PC-3 (cell line): ENCODE measurements at regions of chr4 and their contacts with region 1.

Region 1: DNA sequence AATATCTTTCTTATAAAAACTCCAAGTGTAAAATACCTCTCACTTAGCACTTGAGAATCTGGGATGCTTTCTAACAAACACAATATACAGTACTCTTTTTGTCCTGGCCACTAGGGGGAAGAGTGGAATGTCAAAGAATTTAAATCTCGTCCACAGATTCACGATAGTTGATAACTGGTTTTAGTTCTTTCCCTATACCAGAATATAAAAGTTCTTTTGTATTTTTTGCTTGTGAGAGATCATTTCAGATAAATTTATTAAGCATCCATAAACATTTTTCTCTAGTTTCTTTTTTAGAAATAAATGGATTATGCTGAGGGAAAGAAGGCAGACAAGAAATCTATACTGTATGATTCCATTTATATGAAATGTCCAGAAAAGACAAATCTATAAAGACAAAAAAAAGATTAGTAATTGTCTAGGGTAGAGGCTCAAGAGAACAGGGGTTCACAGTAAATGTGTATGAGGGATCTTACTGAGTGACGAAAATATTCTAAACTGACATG is 50.4 kb downstream of the MGARP start:
- DNase-seq: peak; percentile 62
- ATAC-seq: peak; percentile 76
- H3K4me3 ChIP-seq: no peak overlapping the region
- H3K27ac ChIP-seq: no peak overlapping the region
- H3K4me1 ChIP-seq: no peaks in the 10 kb centered on the region
- H3K27me3 ChIP-seq: no peaks in the 10 kb centered on the region
- CTCF ChIP-seq: peak; percentile 70

Region 2: GRCh38 chr4:139099366-139099982 is 130.1 kb before region 1 on chr4:
- CTCF ChIA-PET with region 1: no interaction called
- POLR2A ChIA-PET with region 1: no interaction called
- intact Hi-C with region 1: loop called (anchors 2 kb)
- DNase-seq: peak; percentile 81
- ATAC-seq: peak; percentile 57
- H3K4me3 ChIP-seq: no peak overlapping the region
- H3K27ac ChIP-seq: no peak overlapping the region
- H3K4me1 ChIP-seq: no peaks in the 10 kb centered on the region
- H3K27me3 ChIP-seq: no peaks in the 10 kb centered on the region
- CTCF ChIP-seq: peak; percentile 81

Region 3: GRCh38 chr4:139184129-139184528 is 45.5 kb before region 1 on chr4:
- CTCF ChIA-PET with region 1: no interaction called
- POLR2A ChIA-PET with region 1: no interaction called
- intact Hi-C with region 1: loop called (anchors 2 kb)
- DNase-seq: peak; percentile 31
- ATAC-seq: peak; percentile 76
- H3K4me3 ChIP-seq: no peak overlapping the region
- H3K27ac ChIP-seq: no peak overlapping the region
- H3K4me1 ChIP-seq: no peaks in the 10 kb centered on the region
- H3K27me3 ChIP-seq: no peaks in the 10 kb centered on the region
- CTCF ChIP-seq: peak; percentile 39; the same call in 1 of the 2 replicates

Region 4: GRCh38 chr4:139279760-139280620 is 50.4 kb after region 1 on chr4 and contains the start of gene MGARP:
- CTCF ChIA-PET with region 1: no interaction called
- POLR2A ChIA-PET with region 1: no interaction called
- intact Hi-C with region 1: loop called (anchors 5 kb)
- DNase-seq: no peak
- ATAC-seq: no peak
- H3K4me3 ChIP-seq: no peak within 1 kb of the TSS
- H3K27ac ChIP-seq: no peak within 1 kb of the TSS
- H3K4me1 ChIP-seq: no peaks in the 10 kb centered on the region
- H3K27me3 ChIP-seq: no peaks in the 10 kb centered on the region
- CTCF ChIP-seq: no peak
- total RNA-seq, gene MGARP: 0.33 TPM in 1 of 2 replicates, not detected in the other

Region 5: DNA sequence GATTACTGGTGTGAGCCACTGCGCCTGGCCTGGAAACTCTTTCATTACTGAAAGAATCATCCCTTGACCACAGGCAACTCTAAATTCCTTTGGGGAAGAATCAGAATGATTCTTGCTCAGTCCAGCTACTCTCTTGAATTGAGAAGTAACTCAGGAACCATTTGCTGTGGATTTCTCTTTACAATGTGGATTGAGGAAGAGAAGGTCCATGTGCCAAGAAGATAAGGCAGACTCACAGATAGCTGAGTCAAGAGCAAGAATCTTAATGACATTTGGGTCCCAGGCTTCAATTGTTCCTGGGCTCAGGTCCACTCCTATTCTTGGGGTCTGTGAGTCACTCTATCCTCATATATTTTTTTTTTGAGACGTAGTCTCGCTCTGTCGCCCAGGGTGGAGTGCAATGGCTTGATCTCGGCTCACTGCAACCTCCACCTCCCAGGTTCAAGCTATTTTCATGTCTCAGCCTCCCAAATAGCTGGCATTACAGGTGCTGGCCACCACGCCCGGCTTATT is 56.7 kb after region 1 on chr4:
- CTCF ChIA-PET with region 1: interaction called, 12 read pairs
- POLR2A ChIA-PET with region 1: no interaction called
- intact Hi-C with region 1: loop called (anchors 5 kb)
- DNase-seq: no peak
- ATAC-seq: no peak
- H3K4me3 ChIP-seq: no peak overlapping the region
- H3K27ac ChIP-seq: no peak overlapping the region
- H3K4me1 ChIP-seq: no peaks in the 10 kb centered on the region
- H3K27me3 ChIP-seq: no peaks in the 10 kb centered on the region
- CTCF ChIP-seq: no peak

Region 6: DNA sequence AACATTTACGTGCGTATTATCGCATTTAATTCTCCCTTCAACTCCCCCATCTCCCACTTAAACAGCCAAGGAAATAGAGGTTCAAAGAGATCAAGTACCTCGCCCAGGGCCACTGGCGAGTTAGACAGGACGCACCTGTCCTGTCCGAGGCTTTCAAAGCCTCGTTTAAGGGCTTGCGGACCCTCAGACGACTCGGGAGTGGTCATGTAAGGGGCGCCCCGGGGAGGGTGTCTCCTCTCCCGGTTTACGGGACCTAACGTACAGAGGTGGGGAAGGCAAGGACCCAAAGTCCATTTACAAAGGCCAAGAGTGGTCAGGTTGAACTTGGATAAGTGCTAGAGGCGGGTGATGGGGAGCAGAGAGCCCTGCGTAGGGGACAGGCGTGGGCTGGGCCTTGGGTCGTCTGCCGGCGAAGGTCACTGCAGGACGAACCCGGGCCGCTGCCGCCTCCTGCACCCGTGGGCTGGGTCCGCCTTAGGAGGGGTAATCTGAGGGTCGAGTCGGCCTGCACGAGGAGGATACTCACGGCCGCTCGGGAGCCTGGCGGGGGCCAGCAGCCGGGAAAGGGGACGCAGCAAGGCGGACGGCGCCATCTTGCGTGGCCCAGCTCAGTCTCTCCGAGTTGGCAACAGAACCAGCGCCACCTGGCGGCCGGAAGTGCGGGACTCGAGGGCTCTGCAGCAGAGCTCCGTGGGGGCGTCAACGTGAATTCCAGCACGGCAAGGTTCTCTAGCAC is 65.8 kb after region 1 on chr4:
- CTCF ChIA-PET with region 1: interaction called, 5 read pairs
- POLR2A ChIA-PET with region 1: no interaction called
- intact Hi-C with region 1: loop called (anchors 1 kb)
- DNase-seq: peak; percentile 92
- ATAC-seq: peak; percentile 87
- H3K4me3 ChIP-seq: peak overlapping the region; percentile 89
- H3K27ac ChIP-seq: peak overlapping the region; percentile 42
- H3K4me1 ChIP-seq: peaks cover 35% of the 10 kb centered on the region
- H3K27me3 ChIP-seq: no peaks in the 10 kb centered on the region
- CTCF ChIP-seq: peak; percentile 76

Region 7: DNA sequence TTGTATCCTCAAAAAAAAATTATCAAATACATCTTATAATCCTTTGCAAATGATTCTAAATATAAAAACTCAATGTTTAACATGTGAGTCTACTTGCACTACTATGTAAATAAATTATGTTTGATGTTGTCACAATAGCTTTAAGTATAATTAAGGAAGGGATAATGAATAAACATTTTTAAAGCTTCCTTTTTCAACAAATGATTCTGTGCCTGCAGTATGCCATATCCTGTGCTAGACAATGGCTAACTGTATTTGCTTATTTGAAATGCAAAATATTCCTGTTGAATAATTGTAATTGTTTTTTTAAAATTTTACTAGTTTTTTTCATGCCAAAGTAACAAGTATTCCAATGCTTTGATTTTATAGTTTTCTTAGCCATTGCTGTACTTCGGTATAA is 131.7 kb after region 1 on chr4:
- CTCF ChIA-PET with region 1: no interaction called
- POLR2A ChIA-PET with region 1: no interaction called
- intact Hi-C with region 1: no loop called
- DNase-seq: no peak
- ATAC-seq: no peak
- H3K4me3 ChIP-seq: no peak overlapping the region
- H3K27ac ChIP-seq: no peak overlapping the region
- H3K4me1 ChIP-seq: no peaks in the 10 kb centered on the region
- H3K27me3 ChIP-seq: no peaks in the 10 kb centered on the region
- CTCF ChIP-seq: no peak